ENCODE measurements at regions of chr3 and their contacts with region 1.

Region 1: DNA sequence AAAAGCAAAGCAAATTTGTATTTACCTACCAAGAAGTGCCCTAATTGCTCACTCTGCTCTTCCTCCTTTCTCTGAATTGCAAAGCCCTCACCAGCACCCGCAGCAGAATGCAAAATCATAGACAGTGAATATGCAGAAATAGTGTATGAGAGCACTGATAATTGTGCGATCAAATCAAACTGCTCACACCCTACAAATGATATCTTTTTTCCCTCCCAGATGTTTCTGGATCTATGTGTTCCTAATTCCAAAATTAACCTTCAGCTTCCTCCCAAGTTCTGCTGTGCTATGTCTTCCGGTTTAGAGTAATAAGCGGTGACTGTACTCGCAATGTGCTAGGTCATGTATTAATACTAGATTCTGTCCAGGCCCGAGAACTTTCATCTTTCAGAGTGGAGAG is 3.4 kb downstream of the GHSR start:
- DNase-seq: no peak
- ATAC-seq: no peak
- H3K4me3 ChIP-seq: no peak overlapping the region
- H3K27ac ChIP-seq: no peak overlapping the region
- H3K4me1 ChIP-seq: no peaks in the 10 kb centered on the region
- H3K27me3 ChIP-seq: peaks cover 35% of the 10 kb centered on the region
- CTCF ChIP-seq: no peak

Region 2: GRCh38 chr3:172388412-172389078 is 56.3 kb before region 1 on chr3:
- CTCF ChIA-PET with region 1: no interaction called
- POLR2A ChIA-PET with region 1: interaction called, 18 read pairs
- in situ Hi-C with region 1: no loop called
- intact Hi-C with region 1: no loop called
- DNase-seq: no peak
- ATAC-seq: no peak
- H3K4me3 ChIP-seq: no peak overlapping the region
- H3K27ac ChIP-seq: no peak overlapping the region
- H3K4me1 ChIP-seq: no peaks in the 10 kb centered on the region
- H3K27me3 ChIP-seq: no peaks in the 10 kb centered on the region
- CTCF ChIP-seq: no peak

Measured in Panc1 (cell line).